ENCODE measurements at regions of chr10 and their contacts with region 1.

Region 1: DNA sequence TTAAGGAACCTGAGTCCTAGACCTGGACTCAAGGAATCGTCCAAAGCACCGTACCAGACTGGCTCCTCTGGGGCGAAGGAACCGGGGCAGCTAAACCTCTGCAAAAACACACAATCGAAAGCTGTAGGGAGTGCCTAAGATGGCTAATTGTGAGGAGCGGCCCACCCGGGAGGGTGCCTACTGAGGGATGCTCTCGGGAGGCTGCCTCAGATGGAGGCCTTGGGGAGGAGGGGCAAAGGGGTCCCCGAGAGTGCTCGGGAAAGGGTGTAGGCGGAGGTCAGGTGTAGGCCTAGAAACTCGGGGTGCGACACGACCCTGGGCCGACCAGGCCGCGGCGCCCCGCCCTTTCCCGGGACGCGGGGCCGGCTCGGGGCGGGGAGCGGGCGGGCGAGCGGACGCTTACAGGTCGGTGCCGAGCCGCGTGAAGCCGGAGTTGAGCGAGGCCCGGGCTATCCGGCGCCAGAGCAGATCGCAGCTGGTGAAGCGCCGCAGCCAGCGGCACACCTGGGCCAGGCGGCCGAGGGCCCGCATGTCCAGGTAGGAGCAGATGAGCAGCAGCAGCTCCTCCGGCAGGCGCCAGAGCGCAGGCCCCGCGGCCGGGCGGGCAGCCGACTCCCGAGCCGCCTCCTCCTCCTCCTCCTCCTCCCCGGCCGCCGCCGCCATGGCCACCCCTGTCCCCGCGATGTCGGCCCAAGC is 844 bp downstream of the FBXW4 start:
- DNase-seq: peak; percentile 80
- ATAC-seq: peak; percentile 76
- H3K4me3 Mint-ChIP-seq: peak overlapping the region; percentile 88
- H3K27ac Mint-ChIP-seq: peak overlapping the region; percentile 97
- H3K4me1 Mint-ChIP-seq: peaks cover 43% of the 10 kb centered on the region
- H3K27me3 Mint-ChIP-seq: no peaks in the 10 kb centered on the region

Region 2: DNA sequence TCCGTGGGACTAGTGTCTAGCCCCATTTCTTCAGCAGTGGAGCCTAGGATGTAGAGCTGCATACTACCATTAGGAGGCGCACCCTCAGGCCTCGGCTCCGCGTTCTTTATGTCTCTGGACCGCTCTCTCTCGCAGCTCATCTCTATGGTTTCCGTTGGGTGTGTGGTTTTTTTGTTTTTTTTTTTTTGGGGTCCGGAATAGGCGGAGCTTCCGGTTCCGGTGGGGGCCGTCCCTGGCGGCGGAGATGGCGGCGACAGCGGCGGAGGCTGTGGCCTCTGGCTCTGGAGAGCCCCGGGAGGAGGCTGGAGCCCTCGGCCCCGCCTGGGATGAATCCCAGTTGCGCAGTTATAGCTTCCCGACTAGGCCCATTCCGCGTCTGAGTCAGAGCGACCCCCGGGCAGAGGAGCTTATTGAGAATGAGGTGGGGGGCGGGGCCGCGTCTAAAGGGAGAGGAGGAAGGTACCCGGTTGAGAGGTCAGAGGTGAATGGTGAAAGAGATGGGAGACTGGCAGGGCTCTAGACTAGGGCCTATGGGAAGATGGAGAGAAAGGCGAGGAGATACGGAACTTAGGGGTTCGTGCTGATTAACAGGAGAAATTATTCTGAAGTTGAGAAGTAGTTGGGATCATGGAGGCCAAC is 1158.3 kb before region 1 on chr10 and contains the start of gene HIF1AN:
- CTCF ChIA-PET with region 1: no interaction called
- POLR2A ChIA-PET with region 1: no interaction called
- intact Hi-C with region 1: loop called in 1 of 2 experiments (anchors 5 kb)
- DNase-seq: peak; percentile 93
- ATAC-seq: peak; percentile 96
- H3K4me3 Mint-ChIP-seq: no peak within 1 kb of the TSS
- H3K27ac Mint-ChIP-seq: no peak within 1 kb of the TSS
- H3K4me1 Mint-ChIP-seq: peaks cover 27% of the 10 kb centered on the region
- H3K27me3 Mint-ChIP-seq: no peaks in the 10 kb centered on the region
- total RNA-seq, gene HIF1AN: 45.9 to 50.8 TPM

Region 3: GRCh38 chr10:101708073-101708472 is 13.9 kb after region 1 on chr10:
- CTCF ChIA-PET with region 1: interaction called, 4 read pairs
- POLR2A ChIA-PET with region 1: no interaction called
- intact Hi-C with region 1: loop called in 1 of 2 experiments (anchors 1 kb)
- DNase-seq: no peak
- ATAC-seq: peak; percentile 40
- H3K4me3 Mint-ChIP-seq: no peak overlapping the region
- H3K27ac Mint-ChIP-seq: no peak overlapping the region
- H3K4me1 Mint-ChIP-seq: peaks cover 21% of the 10 kb centered on the region
- H3K27me3 Mint-ChIP-seq: peaks cover 45% of the 10 kb centered on the region

Region 4: DNA sequence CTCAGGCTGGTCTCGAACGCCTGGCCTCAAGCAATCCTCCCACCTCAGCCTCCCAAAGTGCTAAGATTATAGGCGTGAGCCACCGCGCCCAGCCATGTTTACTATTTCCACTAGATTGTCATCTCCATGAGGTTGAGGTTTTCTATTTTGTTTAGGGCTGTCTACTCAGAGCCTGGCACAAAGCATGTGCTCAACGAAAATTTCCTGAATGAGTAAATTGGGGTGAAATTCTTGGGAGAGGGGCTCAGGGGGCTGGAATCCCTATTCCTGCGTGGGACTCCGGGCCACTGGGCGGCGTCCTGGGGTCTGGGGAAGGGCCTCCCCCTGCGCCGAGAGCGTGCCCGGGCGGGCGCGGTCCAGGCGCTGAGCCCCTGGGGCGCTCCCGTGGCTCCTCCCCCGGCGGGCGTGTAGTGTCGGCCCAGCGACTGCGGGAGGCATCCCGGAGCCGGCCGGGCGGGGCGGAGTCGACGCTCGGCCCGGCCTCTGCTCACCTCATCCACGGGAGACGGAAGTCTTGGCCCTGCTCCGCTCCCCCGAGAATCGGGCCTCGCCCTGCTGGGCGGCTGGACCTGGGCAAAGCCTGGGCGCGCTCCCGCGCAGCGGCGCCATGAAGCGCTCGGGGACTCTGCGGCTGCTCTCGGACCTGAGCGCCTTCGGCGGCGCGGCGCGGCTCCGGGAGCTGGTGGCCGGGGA is 370.9 kb after region 1 on chr10 and contains the start of gene HPS6:
- CTCF ChIA-PET with region 1: no interaction called
- POLR2A ChIA-PET with region 1: no interaction called
- intact Hi-C with region 1: loop called in 1 of 2 experiments (anchors 5 kb)
- DNase-seq: peak; percentile 94
- ATAC-seq: peak; percentile 99
- H3K4me3 Mint-ChIP-seq: peak within 1 kb of the TSS; percentile 79
- H3K27ac Mint-ChIP-seq: peak within 1 kb of the TSS; percentile 88
- H3K4me1 Mint-ChIP-seq: peaks cover 22% of the 10 kb centered on the region
- H3K27me3 Mint-ChIP-seq: no peaks in the 10 kb centered on the region
- total RNA-seq, gene HPS6: 12.9 to 18.9 TPM

Measured in activated CD4-positive, alpha-beta T cell treated with anti-CD3 and anti-CD28 coated beads for 36 hours (primary cell).